ENCODE measurements at regions of chr12 and their contacts with region 1.

Region 1: GRCh38 chr12:132904718-132905328 is 17.4 kb upstream of the CHFR start:
- DNase-seq: peak; percentile 94
- ATAC-seq: peak; percentile 28
- H3K4me3 Mint-ChIP-seq: peak overlapping the region; percentile 42
- H3K27ac Mint-ChIP-seq: no peak overlapping the region
- H3K4me1 Mint-ChIP-seq: peaks cover 10% of the 10 kb centered on the region
- H3K27me3 Mint-ChIP-seq: peaks cover 35% of the 10 kb centered on the region
- CTCF ChIP-seq: peak; percentile 96

Region 2: DNA sequence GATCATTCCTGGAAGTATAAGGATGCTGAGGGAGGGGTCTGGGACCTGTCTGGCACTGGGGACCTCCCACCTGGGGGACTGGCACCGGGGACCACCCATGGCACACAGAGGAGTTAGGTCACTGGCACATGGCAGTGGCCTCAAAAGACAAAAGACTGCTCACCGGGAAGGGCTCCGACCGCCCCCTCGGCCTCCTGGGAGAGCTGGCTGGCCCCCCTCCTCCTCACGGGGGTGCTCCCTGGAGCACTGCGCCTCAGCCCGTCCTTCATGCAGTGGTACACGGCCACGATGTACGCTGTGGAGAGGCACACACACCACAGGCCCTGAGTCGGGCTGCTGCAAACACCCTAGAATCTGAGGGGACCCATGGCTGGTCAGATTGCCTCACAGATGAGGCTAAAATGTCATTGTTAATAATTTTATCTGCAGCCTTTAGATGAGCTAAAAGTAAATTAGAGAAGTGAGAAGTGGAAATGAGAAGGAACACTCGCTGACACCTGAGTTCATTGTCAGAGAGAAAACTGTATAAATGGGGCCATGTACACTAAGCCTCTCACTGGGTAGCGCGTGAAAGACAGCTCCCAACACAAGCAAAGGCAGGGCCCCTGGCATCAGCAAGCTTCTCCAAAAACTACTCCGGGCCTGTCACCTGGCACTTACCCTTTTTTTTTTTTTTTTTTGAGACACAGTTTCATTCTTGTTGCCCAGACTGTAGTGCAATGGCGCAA is 272.2 kb before region 1 on chr12:
- CTCF ChIA-PET with region 1: no interaction called
- POLR2A ChIA-PET with region 1: no interaction called
- DNase-seq: no peak
- ATAC-seq: no peak
- H3K4me3 Mint-ChIP-seq: no peak overlapping the region
- H3K27ac Mint-ChIP-seq: no peak overlapping the region
- H3K4me1 Mint-ChIP-seq: no peaks in the 10 kb centered on the region
- H3K27me3 Mint-ChIP-seq: no peaks in the 10 kb centered on the region
- CTCF ChIP-seq: no peak

Region 3: GRCh38 chr12:132828706-132829534 is 75.9 kb before region 1 on chr12 and contains the start of gene GOLGA3:
- CTCF ChIA-PET with region 1: interaction called, 17 read pairs
- POLR2A ChIA-PET with region 1: no interaction called
- DNase-seq: peak; percentile 95
- ATAC-seq: peak; percentile 96
- H3K4me3 Mint-ChIP-seq: peak within 1 kb of the TSS; percentile 94
- H3K27ac Mint-ChIP-seq: peak within 1 kb of the TSS; percentile 100
- H3K4me1 Mint-ChIP-seq: peaks cover 14% of the 10 kb centered on the region
- H3K27me3 Mint-ChIP-seq: no peaks in the 10 kb centered on the region
- CTCF ChIP-seq: no peak
- total RNA-seq, gene GOLGA3: 36.8 to 47.8 TPM (median 39.6 TPM) in 3 replicates

Region 4: DNA sequence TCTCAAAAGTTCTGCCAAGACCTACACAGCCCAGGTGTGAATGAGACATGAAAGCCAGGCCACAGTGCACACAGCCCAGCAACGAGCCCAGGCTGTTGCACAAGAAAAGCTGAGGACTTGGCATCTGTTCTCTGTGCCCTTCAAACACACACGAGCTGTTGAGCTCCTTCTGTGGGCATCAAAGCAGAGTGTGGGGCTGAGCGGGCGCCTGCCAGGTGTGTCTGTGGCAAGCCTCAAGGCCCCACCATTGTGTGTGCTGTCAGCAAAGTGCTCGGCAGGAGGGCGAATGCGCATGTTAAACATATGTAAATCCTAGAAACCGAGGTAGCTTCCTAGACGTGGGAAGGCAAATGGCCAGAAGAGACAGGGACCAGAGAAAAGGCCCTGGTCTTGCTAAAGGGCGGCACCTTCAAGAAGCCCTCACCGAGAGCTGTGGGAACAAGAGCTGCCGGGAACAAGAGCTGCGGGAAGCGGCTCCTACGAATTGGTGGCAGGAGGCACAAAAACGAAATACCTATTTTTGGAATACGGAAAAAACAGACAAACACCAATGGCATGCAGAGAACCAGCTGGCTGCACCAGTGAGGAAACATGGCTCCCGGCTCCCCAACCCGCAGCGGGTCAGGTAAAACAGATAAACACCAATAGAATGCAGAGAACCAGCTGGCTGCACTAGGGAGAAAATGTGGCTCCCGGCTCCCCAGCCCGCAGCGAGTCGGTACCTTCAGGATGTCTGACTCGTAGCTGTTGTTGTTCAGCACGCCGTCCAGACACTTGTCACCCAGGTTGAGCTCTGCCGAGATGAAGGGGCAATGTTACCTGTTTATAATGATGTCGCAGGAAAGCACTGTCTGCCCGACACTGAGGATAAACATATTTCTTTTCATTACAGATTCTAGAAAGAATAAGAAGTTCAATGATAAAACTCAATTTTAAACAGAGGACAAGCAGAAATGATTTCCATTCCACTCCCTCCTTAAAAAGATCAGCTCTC is 57.2 kb before region 1 on chr12:
- CTCF ChIA-PET with region 1: interaction called, 29 read pairs
- POLR2A ChIA-PET with region 1: no interaction called
- DNase-seq: peak; percentile 79
- ATAC-seq: peak; percentile 91
- H3K4me3 Mint-ChIP-seq: peak overlapping the region; percentile 47
- H3K27ac Mint-ChIP-seq: peak overlapping the region; percentile 98
- H3K4me1 Mint-ChIP-seq: peaks cover 22% of the 10 kb centered on the region
- H3K27me3 Mint-ChIP-seq: no peaks in the 10 kb centered on the region
- CTCF ChIP-seq: no peak

Region 5: GRCh38 chr12:132887513-132888351 is 17.1 kb before region 1 on chr12 and contains the start of gene CHFR:
- CTCF ChIA-PET with region 1: interaction called, 22 read pairs
- POLR2A ChIA-PET with region 1: interaction called, 5 read pairs
- DNase-seq: peak; percentile 96
- ATAC-seq: peak; percentile 94
- H3K4me3 Mint-ChIP-seq: peak within 1 kb of the TSS; percentile 97
- H3K27ac Mint-ChIP-seq: peak within 1 kb of the TSS; percentile 100
- H3K4me1 Mint-ChIP-seq: peaks cover 36% of the 10 kb centered on the region
- H3K27me3 Mint-ChIP-seq: peaks cover 9% of the 10 kb centered on the region
- CTCF ChIP-seq: no peak
- total RNA-seq, gene CHFR: 50.2 to 58.7 TPM (median 53.9 TPM) in 3 replicates

Region 6: GRCh38 chr12:132948146-132949066 is 43.6 kb after region 1 on chr12:
- CTCF ChIA-PET with region 1: no interaction called
- POLR2A ChIA-PET with region 1: no interaction called
- DNase-seq: no peak
- ATAC-seq: no peak
- H3K4me3 Mint-ChIP-seq: no peak overlapping the region
- H3K27ac Mint-ChIP-seq: no peak overlapping the region
- H3K4me1 Mint-ChIP-seq: no peaks in the 10 kb centered on the region
- H3K27me3 Mint-ChIP-seq: no peaks in the 10 kb centered on the region
- CTCF ChIP-seq: no peak

Region 7: DNA sequence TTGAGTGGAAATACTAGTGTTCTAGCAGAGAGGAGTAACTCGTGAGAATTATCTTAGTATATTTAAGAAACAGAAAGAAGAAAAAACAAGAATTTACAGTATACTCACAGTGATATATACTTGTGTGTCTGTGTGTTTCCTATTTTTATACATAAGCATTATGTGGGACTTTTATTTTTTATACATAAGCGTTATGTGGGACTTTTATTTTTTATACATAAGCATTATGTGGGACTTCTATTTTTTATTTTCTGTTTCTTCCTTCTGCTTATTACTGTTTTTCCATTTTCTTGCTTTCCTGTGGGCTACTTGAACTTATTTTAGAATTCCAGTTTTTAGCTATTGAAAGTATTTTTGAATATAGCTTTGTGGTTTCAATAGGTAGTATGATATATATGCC is 169.0 kb after region 1 on chr12:
- CTCF ChIA-PET with region 1: no interaction called
- POLR2A ChIA-PET with region 1: no interaction called
- DNase-seq: no peak
- ATAC-seq: no peak
- H3K4me3 Mint-ChIP-seq: no peak overlapping the region
- H3K27ac Mint-ChIP-seq: no peak overlapping the region
- H3K4me1 Mint-ChIP-seq: no peaks in the 10 kb centered on the region
- H3K27me3 Mint-ChIP-seq: peaks cover 11% of the 10 kb centered on the region
- CTCF ChIP-seq: no peak